ENCODE measurements at regions of chr15 and their contacts with region 1.

Region 1: GRCh38 chr15:59268168-59268979 is 61.7 kb downstream of the LDHAL6B start:
- DNase-seq: no peak
- ATAC-seq: peak; percentile 71
- H3K4me3 ChIP-seq: no peak overlapping the region
- H3K27ac ChIP-seq: peak overlapping the region; percentile 80
- H3K4me1 ChIP-seq: peaks cover 53% of the 10 kb centered on the region
- H3K27me3 ChIP-seq: no peaks in the 10 kb centered on the region
- CTCF ChIP-seq: no peak

Region 2: GRCh38 chr15:59372352-59373211 is 104.2 kb after region 1 on chr15 and contains the start of gene MYO1E:
- CTCF ChIA-PET with region 1: no interaction called
- POLR2A ChIA-PET with region 1: interaction called, 7 read pairs
- in situ Hi-C with region 1: no loop called
- intact Hi-C with region 1: loop called (anchors 10 kb)
- DNase-seq: peak; percentile 96
- ATAC-seq: peak; percentile 95
- H3K4me3 ChIP-seq: peak within 1 kb of the TSS; percentile 89 to 91
- H3K27ac ChIP-seq: peak within 1 kb of the TSS; percentile 89
- H3K4me1 ChIP-seq: peaks cover 20% of the 10 kb centered on the region
- H3K27me3 ChIP-seq: no peaks in the 10 kb centered on the region
- CTCF ChIP-seq: no peak
- total RNA-seq, gene MYO1E: 161 TPM